Esophagus muscularis mucosa (tissue), 4 donors: ENCODE measurements at regions of chr10 and their contacts with region 1.

Region 1: DNA sequence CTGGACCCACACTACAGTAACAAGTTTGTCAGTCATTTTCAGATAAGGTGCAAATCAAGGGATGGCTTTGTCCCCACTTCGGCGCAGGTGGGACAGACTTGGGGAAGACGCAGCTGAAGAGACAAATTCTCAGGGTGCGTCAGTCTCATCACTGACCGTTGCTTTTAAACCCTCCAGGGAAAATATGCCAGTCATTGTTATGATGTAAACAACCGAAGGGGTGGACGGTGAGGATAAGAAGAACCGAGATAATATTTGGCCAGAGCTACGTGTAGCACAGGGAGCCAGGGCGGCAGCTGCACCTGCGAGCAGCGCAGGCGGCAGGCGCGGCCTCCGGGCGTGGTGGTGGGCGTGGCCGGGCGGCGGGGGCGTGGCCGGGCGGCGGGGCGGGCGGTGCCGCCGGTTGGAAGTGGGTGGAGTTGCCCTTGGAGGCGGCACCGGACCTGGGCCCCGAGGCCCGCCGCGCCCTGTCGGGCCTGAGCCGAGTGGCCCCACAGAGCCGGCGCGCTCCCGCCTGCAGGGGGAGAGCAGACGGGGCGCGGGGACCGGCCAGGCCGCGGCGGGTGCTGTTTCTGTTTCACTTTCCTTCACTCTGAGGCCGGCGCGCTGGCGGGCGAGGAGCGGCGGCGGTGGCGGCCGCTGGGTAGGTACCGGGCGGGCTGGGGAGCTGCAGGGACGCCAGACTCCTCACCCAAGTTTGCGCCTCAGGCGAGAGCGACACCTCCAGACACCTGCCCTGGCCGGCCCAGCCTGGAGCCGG is at the start of gene PCGF5:
- DNase-seq: peak; percentile 96
- H3K4me3 ChIP-seq: peak within 1 kb of the TSS; percentile 83 to 95 (median 92)
- H3K27ac ChIP-seq: peak within 1 kb of the TSS; percentile 89 to 95 (median 94)
- H3K4me1 ChIP-seq: peaks cover 21 to 51% (median 39%) of the 10 kb centered on the region in 4 donors
- H3K27me3 ChIP-seq: no peaks in the 10 kb centered on the region
- CTCF ChIP-seq: peak; percentile 29 to 55 (median 44)
- EP300 ChIP-seq: no peak
- POLR2A ChIP-seq: peak; percentile 26
- total RNA-seq, gene PCGF5: 41.6 to 62.7 (median 52.6) TPM

Region 2: DNA sequence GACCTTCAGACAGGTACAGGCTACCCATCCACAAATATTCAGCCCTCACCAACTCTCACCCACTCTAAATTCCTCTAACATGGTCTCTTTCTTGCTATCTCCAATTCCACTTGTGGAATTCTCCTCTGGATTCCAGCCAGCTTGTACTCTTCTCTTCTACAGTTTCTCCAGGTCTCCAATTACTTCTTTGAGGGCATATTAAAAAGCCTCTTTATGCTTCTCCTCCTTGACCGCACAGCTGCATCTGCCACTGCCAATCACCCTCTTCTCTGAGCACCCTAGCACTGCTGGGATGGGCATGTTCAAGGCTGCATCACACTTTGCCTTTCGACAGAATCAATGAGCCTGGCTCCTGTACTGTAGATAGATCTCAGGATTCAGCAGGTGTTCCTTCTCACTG is 198.0 kb before region 1 on chr10:
- intact Hi-C with region 1: no loop called
- DNase-seq: no peak
- H3K4me3 ChIP-seq: no peak overlapping the region
- H3K27ac ChIP-seq: no peak overlapping the region
- H3K4me1 ChIP-seq: peaks cover 6 to 14% (median 11%) of the 10 kb centered on the region in 4 donors
- H3K27me3 ChIP-seq: no peaks in the 10 kb centered on the region
- CTCF ChIP-seq: no peak
- EP300 ChIP-seq: no peak
- POLR2A ChIP-seq: no peak

Region 3: DNA sequence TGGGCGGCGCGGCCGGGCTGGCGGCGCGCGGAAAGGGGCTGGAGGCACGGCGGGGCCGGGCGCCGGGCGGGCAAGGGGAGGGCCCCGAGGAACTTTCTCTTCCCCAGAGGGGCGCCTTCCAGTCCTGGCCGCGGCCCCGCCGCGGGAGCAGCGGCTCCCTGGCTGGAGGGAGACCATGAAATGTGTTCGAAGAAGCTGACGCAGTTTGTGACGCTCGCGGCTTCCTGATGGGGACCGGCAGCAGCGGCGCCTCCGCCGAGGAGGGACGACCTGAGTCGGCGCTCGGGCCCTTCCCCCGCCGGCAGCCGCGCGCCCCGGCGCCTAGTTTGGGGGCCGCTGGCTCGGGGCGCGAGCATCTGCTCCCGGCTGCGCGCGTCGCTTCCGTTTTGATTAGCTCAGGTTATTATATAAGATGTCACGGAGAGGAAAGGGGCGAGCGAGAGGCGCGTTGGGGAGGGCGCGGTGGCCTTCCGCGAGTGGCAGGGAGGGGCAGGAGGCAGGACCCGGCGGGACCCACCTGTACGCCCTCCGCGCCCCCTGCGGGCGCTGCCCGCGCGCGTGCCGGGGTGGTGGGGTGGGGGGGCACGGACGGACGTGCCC is 57.0 kb before region 1 on chr10:
- intact Hi-C with region 1: loop called (anchors 2 kb)
- DNase-seq: no peak
- H3K4me3 ChIP-seq: peak overlapping the region; percentile 93 to 97 (median 94)
- H3K27ac ChIP-seq: peak overlapping the region; percentile 96 to 99 (median 97)
- H3K4me1 ChIP-seq: peaks cover 5 to 33% (median 25%) of the 10 kb centered on the region in 4 donors
- H3K27me3 ChIP-seq: no peaks in the 10 kb centered on the region
- CTCF ChIP-seq: peak in 1 of 3 experiments; percentile 10
- EP300 ChIP-seq: no peak
- POLR2A ChIP-seq: no peak